Activated T-helper 1 cell treated with anti-CD3 and anti-CD28 coated beads, Interleukin-12 subunit alpha, Interleukin-12 subunit beta, Interleukin-2, Interleukin-4 antibody, amounts not matched to agents 30 ng/mL and 10 ng/mL and 1 ng/mL, durations not matched to agents 14 hours and 24 hours and 36 hours (primary cell): ENCODE measurements at regions of chr5 and their contacts with region 1.

Region 1: DNA sequence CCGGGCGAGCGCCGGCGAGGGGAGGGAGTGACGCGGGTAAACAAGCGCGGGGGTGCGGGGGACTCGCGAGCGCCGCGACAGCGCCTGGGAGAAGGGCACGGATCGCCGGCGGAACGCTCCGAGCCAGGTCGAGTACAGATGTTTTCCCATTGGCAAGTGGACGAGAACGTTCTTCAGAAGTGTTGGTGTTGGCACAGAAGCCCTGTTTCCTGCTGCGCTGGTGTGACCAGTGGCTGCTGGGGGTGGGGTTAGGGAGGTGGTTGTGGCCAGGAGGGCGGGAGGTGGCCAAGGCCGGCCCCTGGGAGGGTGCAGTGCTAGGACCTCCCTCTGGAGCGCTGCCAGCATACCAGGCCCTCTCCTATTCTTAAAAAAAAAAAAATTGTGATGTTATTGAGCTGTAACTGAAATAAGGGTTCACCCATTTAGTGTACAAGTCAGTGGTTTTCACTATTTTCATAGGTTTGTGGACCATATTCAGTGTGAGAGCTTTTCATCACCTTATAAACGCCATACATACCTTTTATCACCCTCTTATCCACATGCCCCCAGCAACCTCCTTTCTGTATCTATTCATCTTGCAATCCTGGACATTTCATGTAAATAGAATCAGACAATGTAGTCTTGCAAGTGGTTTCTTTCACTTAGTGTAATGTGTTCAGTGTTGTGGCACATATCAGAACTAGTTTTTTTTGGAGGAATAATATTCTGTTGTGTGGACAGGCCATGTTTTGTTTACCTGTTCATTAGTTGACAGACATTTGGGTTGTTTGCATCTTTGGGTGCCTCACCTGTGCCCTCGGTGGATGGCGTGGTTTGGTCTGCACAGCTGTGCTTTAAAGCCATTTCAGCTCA is 1.1 kb downstream of the SQSTM1 start:
- DNase-seq: peak; percentile 83
- H3K4me3 Mint-ChIP-seq: peak overlapping the region; percentile 95
- H3K27ac Mint-ChIP-seq: peak overlapping the region; percentile 97
- H3K4me1 Mint-ChIP-seq: peaks cover 48% of the 10 kb centered on the region
- H3K27me3 Mint-ChIP-seq: no peaks in the 10 kb centered on the region

Region 2: GRCh38 chr5:179678223-179679013 is 143.4 kb before region 1 on chr5:
- intact Hi-C with region 1: loop called (anchors 5 kb)
- DNase-seq: peak; percentile 93
- H3K4me3 Mint-ChIP-seq: peak overlapping the region; percentile 99
- H3K27ac Mint-ChIP-seq: peak overlapping the region; percentile 98
- H3K4me1 Mint-ChIP-seq: peaks cover 21% of the 10 kb centered on the region
- H3K27me3 Mint-ChIP-seq: no peaks in the 10 kb centered on the region

Region 3: GRCh38 chr5:179763215-179763945 is 58.4 kb before region 1 on chr5:
- intact Hi-C with region 1: loop called (anchors 2 kb)
- DNase-seq: peak; percentile 11
- H3K4me3 Mint-ChIP-seq: no peak overlapping the region
- H3K27ac Mint-ChIP-seq: no peak overlapping the region
- H3K4me1 Mint-ChIP-seq: peaks cover 51% of the 10 kb centered on the region
- H3K27me3 Mint-ChIP-seq: no peaks in the 10 kb centered on the region

Region 4: DNA sequence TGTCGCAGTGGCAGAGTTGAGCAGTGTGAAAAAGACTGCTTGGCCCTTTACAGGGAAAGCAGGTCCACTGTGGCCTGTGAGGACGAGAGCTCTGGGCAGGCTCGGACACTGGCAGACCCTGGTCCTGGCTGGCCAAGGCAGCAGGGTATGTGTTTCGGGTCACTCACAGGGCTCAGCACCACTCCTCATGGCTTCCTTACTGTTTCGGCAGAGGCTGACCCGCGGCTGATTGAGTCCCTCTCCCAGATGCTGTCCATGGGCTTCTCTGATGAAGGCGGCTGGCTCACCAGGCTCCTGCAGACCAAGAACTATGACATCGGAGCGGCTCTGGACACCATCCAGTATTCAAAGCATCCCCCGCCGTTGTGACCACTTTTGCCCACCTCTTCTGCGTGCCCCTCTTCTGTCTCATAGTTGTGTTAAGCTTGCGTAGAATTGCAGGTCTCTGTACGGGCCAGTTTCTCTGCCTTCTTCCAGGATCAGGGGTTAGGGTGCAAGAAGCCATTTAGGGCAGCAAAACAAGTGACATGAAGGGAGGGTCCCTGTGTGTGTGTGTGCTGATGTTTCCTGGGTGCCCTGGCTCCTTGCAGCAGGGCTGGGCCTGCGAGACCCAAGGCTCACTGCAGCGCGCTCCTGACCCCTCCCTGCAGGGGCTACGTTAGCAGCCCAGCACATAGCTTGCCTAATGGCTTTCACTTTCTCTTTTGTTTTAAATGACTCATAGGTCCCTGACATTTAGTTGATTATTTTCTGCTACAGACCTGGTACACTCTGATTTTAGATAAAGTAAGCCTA is 14.6 kb after region 1 on chr5:
- intact Hi-C with region 1: loop called (anchors 1 kb)
- DNase-seq: peak; percentile 52
- H3K4me3 Mint-ChIP-seq: peak overlapping the region; percentile 48
- H3K27ac Mint-ChIP-seq: peak overlapping the region; percentile 77
- H3K4me1 Mint-ChIP-seq: peaks cover 16% of the 10 kb centered on the region
- H3K27me3 Mint-ChIP-seq: no peaks in the 10 kb centered on the region

Region 5: GRCh38 chr5:179963375-179963774 is 141.6 kb after region 1 on chr5:
- intact Hi-C with region 1: no loop called
- DNase-seq: no peak
- H3K4me3 Mint-ChIP-seq: no peak overlapping the region
- H3K27ac Mint-ChIP-seq: no peak overlapping the region
- H3K4me1 Mint-ChIP-seq: no peaks in the 10 kb centered on the region
- H3K27me3 Mint-ChIP-seq: no peaks in the 10 kb centered on the region

Region 6: GRCh38 chr5:180353048-180353979 is 531.5 kb after region 1 on chr5 and contains the start of gene GFPT2:
- intact Hi-C with region 1: loop called (anchors 5 kb)
- DNase-seq: peak; percentile 61
- H3K4me3 Mint-ChIP-seq: peak within 1 kb of the TSS; percentile 70
- H3K27ac Mint-ChIP-seq: no peak within 1 kb of the TSS
- H3K4me1 Mint-ChIP-seq: no peaks in the 10 kb centered on the region
- H3K27me3 Mint-ChIP-seq: peaks cover 50% of the 10 kb centered on the region
- total RNA-seq, gene GFPT2: 1.1 and 1.4 TPM in 2 replicates